Activated CD4-positive, alpha-beta memory T cell treated with anti-CD3 and anti-CD28 coated beads, Interleukin-2, amount 10 ng/mL, durations not matched to agents 7 days and 5 days (primary cell): ENCODE measurements at regions of chr11 and their contacts with region 1.

Region 1: DNA sequence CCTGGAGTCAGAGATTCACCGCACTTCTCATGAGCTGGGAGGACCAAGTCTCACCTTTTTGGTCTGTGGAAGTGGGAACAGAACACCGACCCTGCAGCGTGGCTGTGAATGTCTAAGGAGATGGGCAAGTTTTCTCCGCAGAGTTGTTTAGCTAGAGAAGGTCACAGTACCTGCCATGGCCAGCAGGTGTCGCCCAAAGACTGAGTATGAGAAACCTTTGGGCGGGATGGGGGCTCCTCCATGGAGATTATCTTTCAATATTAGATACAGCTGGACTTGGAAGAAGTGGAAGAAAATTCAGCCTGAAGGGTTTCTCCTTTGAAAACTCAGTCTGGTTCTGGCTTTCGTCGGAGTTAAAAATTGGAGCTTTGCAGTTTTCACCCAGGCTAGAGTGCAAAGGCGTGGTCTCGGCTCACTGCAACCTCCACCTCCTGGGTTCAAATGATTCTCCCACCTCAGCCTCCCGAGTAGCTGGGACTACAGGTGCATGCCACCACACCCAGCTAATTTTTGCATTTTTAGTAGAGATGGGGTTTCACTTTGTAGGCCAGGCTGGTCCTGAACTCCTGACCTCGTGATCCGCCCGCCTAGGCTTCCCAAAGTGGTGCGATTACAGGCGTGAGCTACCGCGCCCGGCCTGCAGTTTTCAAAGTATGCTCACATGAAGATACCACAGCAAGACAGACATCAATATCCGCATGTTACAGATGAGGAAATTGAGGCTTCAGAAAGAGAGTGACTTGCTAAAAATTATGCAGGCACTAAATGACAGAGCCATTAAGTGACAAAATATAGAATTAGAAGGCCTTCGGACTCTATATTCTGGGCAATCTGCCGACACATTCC is 10.7 kb upstream of the DSCAML1 start:
- DNase-seq: peak; percentile 78
- H3K4me3 Mint-ChIP-seq: no peak overlapping the region
- H3K27ac Mint-ChIP-seq: no peak overlapping the region
- H3K4me1 Mint-ChIP-seq: peaks cover 18% of the 10 kb centered on the region
- H3K27me3 Mint-ChIP-seq: peaks cover 26% of the 10 kb centered on the region

Region 2: DNA sequence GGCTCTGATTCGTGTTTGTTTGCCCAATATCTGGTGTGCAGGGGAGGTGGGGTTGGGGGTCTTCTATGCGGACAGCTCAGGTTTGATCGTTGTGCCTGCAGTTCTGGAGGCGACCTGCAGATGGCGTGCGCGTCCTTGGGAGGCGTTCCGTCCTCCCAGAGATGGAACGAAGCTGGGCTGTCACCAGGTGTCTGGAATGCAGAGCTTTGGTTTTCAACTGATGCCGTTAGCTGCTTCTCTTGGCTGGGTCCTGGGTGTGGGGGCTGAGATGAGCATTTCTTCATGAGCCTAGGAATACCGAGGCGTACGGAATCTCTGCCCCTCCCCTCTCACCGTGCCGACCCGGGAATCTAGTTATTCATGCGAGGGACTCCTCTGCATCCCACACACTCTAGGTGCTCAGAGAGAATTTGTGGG is 381.4 kb before region 1 on chr11:
- CTCF ChIA-PET with region 1: interaction called, 19 read pairs
- POLR2A ChIA-PET with region 1: no interaction called
- DNase-seq: peak; percentile 68
- H3K4me3 Mint-ChIP-seq: no peak overlapping the region
- H3K27ac Mint-ChIP-seq: no peak overlapping the region
- H3K4me1 Mint-ChIP-seq: peaks cover 2% of the 10 kb centered on the region
- H3K27me3 Mint-ChIP-seq: peaks cover 9% of the 10 kb centered on the region

Region 3: GRCh38 chr11:117828611-117829368 is 21.1 kb after region 1 on chr11:
- CTCF ChIA-PET with region 1: interaction called, 189 read pairs
- POLR2A ChIA-PET with region 1: interaction called, 3 read pairs
- DNase-seq: peak; percentile 85
- H3K4me3 Mint-ChIP-seq: no peak overlapping the region
- H3K27ac Mint-ChIP-seq: peak overlapping the region; percentile 74
- H3K4me1 Mint-ChIP-seq: peaks cover 53% of the 10 kb centered on the region
- H3K27me3 Mint-ChIP-seq: no peaks in the 10 kb centered on the region

Region 4: GRCh38 chr11:117843666-117844484 is 36.2 kb after region 1 on chr11:
- CTCF ChIA-PET with region 1: interaction called, 13 read pairs
- POLR2A ChIA-PET with region 1: no interaction called
- DNase-seq: peak; percentile 85
- H3K4me3 Mint-ChIP-seq: no peak overlapping the region
- H3K27ac Mint-ChIP-seq: no peak overlapping the region
- H3K4me1 Mint-ChIP-seq: peaks cover 1% of the 10 kb centered on the region
- H3K27me3 Mint-ChIP-seq: peaks cover 6% of the 10 kb centered on the region

Region 5: GRCh38 chr11:117907251-117907981 is 99.7 kb after region 1 on chr11:
- CTCF ChIA-PET with region 1: interaction called, 11 read pairs
- POLR2A ChIA-PET with region 1: no interaction called
- DNase-seq: peak; percentile 82
- H3K4me3 Mint-ChIP-seq: peak overlapping the region; percentile 48
- H3K27ac Mint-ChIP-seq: peak overlapping the region; percentile 50
- H3K4me1 Mint-ChIP-seq: peaks cover 12% of the 10 kb centered on the region
- H3K27me3 Mint-ChIP-seq: peaks cover under 1% of the 10 kb centered on the region

Region 6: GRCh38 chr11:118046051-118046963 is 238.6 kb after region 1 on chr11:
- CTCF ChIA-PET with region 1: interaction called, 81 read pairs
- POLR2A ChIA-PET with region 1: no interaction called
- DNase-seq: peak; percentile 44
- H3K4me3 Mint-ChIP-seq: no peak overlapping the region
- H3K27ac Mint-ChIP-seq: peak overlapping the region; percentile 78
- H3K4me1 Mint-ChIP-seq: peaks cover 90% of the 10 kb centered on the region
- H3K27me3 Mint-ChIP-seq: no peaks in the 10 kb centered on the region

Region 7: GRCh38 chr11:118171269-118172062 is 363.8 kb after region 1 on chr11:
- CTCF ChIA-PET with region 1: interaction called, 27 read pairs
- POLR2A ChIA-PET with region 1: no interaction called
- DNase-seq: peak; percentile 73
- H3K4me3 Mint-ChIP-seq: no peak overlapping the region
- H3K27ac Mint-ChIP-seq: no peak overlapping the region
- H3K4me1 Mint-ChIP-seq: peaks cover 2% of the 10 kb centered on the region
- H3K27me3 Mint-ChIP-seq: peaks cover 28% of the 10 kb centered on the region